HEK293 (cell line): ENCODE measurements at regions of chr1 and their contacts with region 1.

Region 1: GRCh38 chr1:174713796-174714195 is 266.0 kb downstream of the GPR52 start:
- H3K4me3 ChIP-seq: no peak overlapping the region
- H3K27ac ChIP-seq: no peak overlapping the region
- H3K4me1 ChIP-seq: no peaks in the 10 kb centered on the region
- CTCF ChIP-seq: no peak

Region 2: GRCh38 chr1:174726167-174726879 is 12.5 kb after region 1 on chr1:
- CTCF ChIA-PET with region 1: interaction called, 10 read pairs
- POLR2A ChIA-PET with region 1: no interaction called
- H3K4me3 ChIP-seq: no peak overlapping the region
- H3K27ac ChIP-seq: no peak overlapping the region
- H3K4me1 ChIP-seq: no peaks in the 10 kb centered on the region
- CTCF ChIP-seq: no peak